ENCODE measurements at regions of chr11 and their contacts with region 1.

Region 1: GRCh38 chr11:10556590-10556989 is 11.9 kb downstream of the LYVE1 start:
- DNase-seq: peak; percentile 93
- H3K4me3 ChIP-seq: no peak overlapping the region
- H3K27ac ChIP-seq: peak overlapping the region; percentile 100
- H3K4me1 ChIP-seq: peaks cover 40% of the 10 kb centered on the region
- H3K27me3 ChIP-seq: no peaks in the 10 kb centered on the region
- CTCF ChIP-seq: no peak

Region 2: GRCh38 chr11:9651899-9652748 is 904.5 kb before region 1 on chr11:
- CTCF ChIA-PET with region 1: no interaction called
- POLR2A ChIA-PET with region 1: no interaction called
- intact Hi-C with region 1: no loop called
- DNase-seq: no peak
- H3K4me3 ChIP-seq: no peak overlapping the region
- H3K27ac ChIP-seq: no peak overlapping the region
- H3K4me1 ChIP-seq: no peaks in the 10 kb centered on the region
- H3K27me3 ChIP-seq: no peaks in the 10 kb centered on the region
- CTCF ChIP-seq: no peak

Region 3: DNA sequence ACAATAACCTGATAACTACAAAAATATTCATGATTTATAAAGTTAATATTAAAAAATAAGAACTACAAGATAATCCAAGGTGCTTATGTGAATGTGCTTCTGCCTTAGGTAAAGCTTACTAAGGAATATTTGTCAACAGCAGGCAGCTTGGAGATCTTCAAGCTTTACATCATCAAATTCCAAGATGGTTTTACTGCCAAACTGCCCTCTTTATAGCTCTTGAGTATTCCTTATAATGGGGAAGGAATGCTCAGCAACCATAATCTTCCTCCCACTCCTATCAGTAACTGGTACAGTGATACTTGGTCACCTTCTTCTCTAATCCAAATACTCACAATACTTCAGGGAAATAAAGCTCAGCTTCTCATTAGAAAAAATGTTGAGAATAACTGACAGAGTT is 292.7 kb before region 1 on chr11:
- CTCF ChIA-PET with region 1: no interaction called
- POLR2A ChIA-PET with region 1: no interaction called
- intact Hi-C with region 1: no loop called
- DNase-seq: peak; percentile 37
- H3K4me3 ChIP-seq: no peak overlapping the region
- H3K27ac ChIP-seq: no peak overlapping the region
- H3K4me1 ChIP-seq: peaks cover 5% of the 10 kb centered on the region
- H3K27me3 ChIP-seq: no peaks in the 10 kb centered on the region
- CTCF ChIP-seq: no peak

Region 4: GRCh38 chr11:10653926-10654810 is 97.6 kb after region 1 on chr11:
- CTCF ChIA-PET with region 1: no interaction called
- POLR2A ChIA-PET with region 1: no interaction called
- intact Hi-C with region 1: loop called (anchors 1 kb)
- DNase-seq: peak; percentile 73
- H3K4me3 ChIP-seq: no peak overlapping the region
- H3K27ac ChIP-seq: peak overlapping the region; percentile 68
- H3K4me1 ChIP-seq: peaks cover 73% of the 10 kb centered on the region
- H3K27me3 ChIP-seq: no peaks in the 10 kb centered on the region
- CTCF ChIP-seq: peak; percentile 74